ENCODE measurements at regions of chrX and their contacts with region 1.

Region 1: GRCh38 chrX:153539171-153539978 is 21.9 kb downstream of the ATP2B3 start:
- DNase-seq: peak; percentile 73 to 81 (median 80)
- ATAC-seq: peak; percentile 98
- H3K4me3 ChIP-seq: no peak overlapping the region
- H3K27ac ChIP-seq: no peak overlapping the region
- H3K4me1 ChIP-seq: peaks cover 0 to 44% of the 10 kb centered on the region in 2 experiments; a peak in 2 of 5 replicates
- H3K27me3 ChIP-seq: peaks cover 0 to 50% of the 10 kb centered on the region in 2 experiments; a peak in 4 of 5 replicates
- CTCF ChIP-seq: peak; percentile 94 to 99 (median 99)
- EP300 ChIP-seq: no peak
- POLR2A ChIP-seq: no peak
- RAD21 ChIP-seq: peak; percentile 85 to 86

Region 2: GRCh38 chrX:153477901-153478300 is 61.5 kb before region 1 on chrX:
- CTCF ChIA-PET with region 1: no interaction called
- POLR2A ChIA-PET with region 1: no interaction called
- in situ Hi-C with region 1: no loop called
- intact Hi-C with region 1: no loop called
- DNase-seq: no peak
- ATAC-seq: no peak
- H3K4me3 ChIP-seq: no peak overlapping the region
- H3K27ac ChIP-seq: no peak overlapping the region
- H3K4me1 ChIP-seq: peaks cover 4 to 54% of the 10 kb centered on the region in 2 experiments; a peak in 4 of 5 replicates
- H3K27me3 ChIP-seq: no peaks in the 10 kb centered on the region
- CTCF ChIP-seq: no peak
- EP300 ChIP-seq: no peak
- POLR2A ChIP-seq: no peak
- RAD21 ChIP-seq: no peak

Region 3: DNA sequence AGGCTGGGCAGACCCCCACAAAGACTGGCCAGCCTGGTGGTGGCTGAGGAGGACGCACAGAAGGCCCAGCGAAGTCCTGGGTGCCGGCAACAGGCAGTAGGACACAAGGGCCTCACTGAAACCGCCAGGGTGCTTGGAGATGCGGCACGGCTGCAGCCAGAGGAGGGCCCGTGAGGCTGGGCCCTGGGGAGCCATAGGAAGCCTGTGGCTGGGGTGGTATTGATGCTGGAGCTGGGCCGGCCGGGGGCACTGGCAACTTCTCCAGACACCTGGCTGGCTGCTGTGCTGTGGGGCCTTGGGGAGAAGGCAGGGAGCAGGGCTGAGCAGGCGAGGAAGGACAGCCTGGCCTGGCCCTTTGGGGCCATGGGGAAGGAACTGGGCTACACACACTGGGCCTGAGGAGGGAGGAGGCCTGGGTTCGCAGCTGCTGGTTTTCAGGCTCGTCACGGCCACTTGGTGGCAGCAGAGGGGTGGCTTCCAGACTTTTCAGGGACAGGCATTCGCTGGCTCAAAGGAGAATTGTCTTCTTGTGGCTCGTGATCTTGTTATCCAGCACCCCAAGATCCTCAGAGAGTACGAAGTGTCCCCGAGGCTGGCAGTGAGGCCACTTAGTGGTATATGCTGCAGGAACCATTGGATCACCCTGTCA is 15.3 kb after region 1 on chrX:
- CTCF ChIA-PET with region 1: interaction called, 3 read pairs
- POLR2A ChIA-PET with region 1: interaction called, 5 read pairs
- in situ Hi-C with region 1: no loop called
- intact Hi-C with region 1: loop called (anchors 1 kb)
- DNase-seq: peak; percentile 68 to 75 (median 68)
- ATAC-seq: peak; percentile 92
- H3K4me3 ChIP-seq: no peak overlapping the region
- H3K27ac ChIP-seq: no peak overlapping the region
- H3K4me1 ChIP-seq: peaks cover 0 to 27% of the 10 kb centered on the region in 2 experiments; a peak in 2 of 5 replicates
- H3K27me3 ChIP-seq: peaks cover 31 to 80% of the 10 kb centered on the region in 2 experiments
- CTCF ChIP-seq: peak; percentile 76 to 87 (median 81)
- EP300 ChIP-seq: no peak
- POLR2A ChIP-seq: no peak
- RAD21 ChIP-seq: peak; percentile 41 to 75

Region 4: DNA sequence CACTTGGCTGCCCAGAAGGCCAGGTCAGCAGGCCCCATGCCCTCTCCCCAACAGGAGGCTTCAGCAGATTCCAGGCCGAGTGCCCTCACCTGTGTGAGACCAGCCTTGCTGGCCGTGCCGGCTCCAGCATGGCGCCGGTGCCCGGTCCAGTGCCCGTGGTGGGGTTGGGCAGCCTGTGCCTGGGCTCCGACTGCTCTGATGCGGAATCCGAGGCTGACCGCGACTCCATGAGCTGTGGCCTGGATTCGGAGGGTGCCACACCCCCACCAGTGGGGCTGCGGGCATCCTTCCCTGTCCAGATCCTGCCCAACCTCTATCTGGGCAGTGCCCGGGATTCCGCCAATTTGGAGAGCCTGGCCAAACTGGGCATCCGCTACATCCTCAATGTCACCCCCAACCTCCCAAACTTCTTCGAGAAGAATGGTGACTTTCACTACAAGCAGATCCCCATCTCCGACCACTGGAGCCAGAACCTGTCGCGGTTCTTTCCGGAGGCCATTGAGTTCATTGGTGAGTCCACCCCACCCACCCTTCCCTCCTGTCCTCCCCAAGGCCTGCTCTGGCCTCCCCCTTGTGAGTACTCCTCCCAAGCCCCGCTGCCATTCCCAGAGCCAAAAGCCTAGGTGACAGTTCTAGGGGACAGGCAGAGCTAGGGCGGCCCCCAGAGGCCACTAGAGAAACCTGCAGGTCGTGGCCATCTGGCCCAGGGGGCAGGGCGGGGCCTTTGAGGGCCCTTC is 110.0 kb after region 1 on chrX:
- CTCF ChIA-PET with region 1: interaction called, 4 read pairs
- POLR2A ChIA-PET with region 1: interaction called, 3 read pairs
- in situ Hi-C with region 1: no loop called
- intact Hi-C with region 1: loop called (anchors 5 kb)
- DNase-seq: peak; percentile 52 to 74 (median 61)
- ATAC-seq: peak; percentile 87
- H3K4me3 ChIP-seq: no peak overlapping the region
- H3K27ac ChIP-seq: no peak overlapping the region
- H3K4me1 ChIP-seq: peaks cover 5 to 49% of the 10 kb centered on the region in 2 experiments; a peak in 3 of 5 replicates
- H3K27me3 ChIP-seq: no peaks in the 10 kb centered on the region; a peak in 1 of 5 replicates
- CTCF ChIP-seq: peak; percentile 66 to 90 (median 77)
- EP300 ChIP-seq: no peak
- POLR2A ChIP-seq: no peak
- RAD21 ChIP-seq: peak in 1 of 2 experiments; percentile 64; a peak in 2 of 4 replicates

Region 5: GRCh38 chrX:153667956-153668396 is 128.6 kb after region 1 on chrX:
- CTCF ChIA-PET with region 1: interaction called, 14 read pairs
- POLR2A ChIA-PET with region 1: interaction called, 3 read pairs
- in situ Hi-C with region 1: no loop called
- intact Hi-C with region 1: loop called (anchors 5 kb)
- DNase-seq: peak; percentile 72 to 86 (median 74)
- ATAC-seq: peak; percentile 90
- H3K4me3 ChIP-seq: no peak overlapping the region
- H3K27ac ChIP-seq: no peak overlapping the region
- H3K4me1 ChIP-seq: peaks cover 5 to 43% of the 10 kb centered on the region in 2 experiments; a peak in 4 of 5 replicates
- H3K27me3 ChIP-seq: peaks cover 2 to 18% of the 10 kb centered on the region in 2 experiments; a peak in 3 of 5 replicates
- CTCF ChIP-seq: peak; percentile 82 to 91 (median 89)
- EP300 ChIP-seq: no peak
- POLR2A ChIP-seq: no peak
- RAD21 ChIP-seq: peak; percentile 62 to 76

Region 6: GRCh38 chrX:153708415-153708814 is 169.0 kb after region 1 on chrX:
- CTCF ChIA-PET with region 1: interaction called, 14 read pairs
- POLR2A ChIA-PET with region 1: no interaction called
- in situ Hi-C with region 1: no loop called
- intact Hi-C with region 1: no loop called
- DNase-seq: peak; percentile 50 to 89 (median 65)
- ATAC-seq: peak; percentile 98
- H3K4me3 ChIP-seq: no peak overlapping the region
- H3K27ac ChIP-seq: peak overlapping the region; percentile 60; the same call in 2 of the 3 replicates
- H3K4me1 ChIP-seq: peaks cover 3 to 13% of the 10 kb centered on the region in 2 experiments; a peak in 4 of 5 replicates
- H3K27me3 ChIP-seq: no peaks in the 10 kb centered on the region
- CTCF ChIP-seq: peak; percentile 85 to 90 (median 87)
- EP300 ChIP-seq: no peak
- POLR2A ChIP-seq: no peak
- RAD21 ChIP-seq: peak; percentile 69 to 79

Region 7: GRCh38 chrX:154051201-154051810 is 511.9 kb after region 1 on chrX:
- CTCF ChIA-PET with region 1: no interaction called
- POLR2A ChIA-PET with region 1: no interaction called
- in situ Hi-C with region 1: no loop called
- intact Hi-C with region 1: no loop called
- DNase-seq: peak; percentile 57 to 78 (median 63)
- ATAC-seq: peak; percentile 91
- H3K4me3 ChIP-seq: no peak overlapping the region
- H3K27ac ChIP-seq: peak overlapping the region; percentile 22; the same call in 2 of the 3 replicates
- H3K4me1 ChIP-seq: peaks cover 5 to 15% of the 10 kb centered on the region in 2 experiments; a peak in 3 of 5 replicates
- H3K27me3 ChIP-seq: no peaks in the 10 kb centered on the region
- CTCF ChIP-seq: peak; percentile 63 to 76 (median 64)
- EP300 ChIP-seq: no peak
- POLR2A ChIP-seq: no peak
- RAD21 ChIP-seq: peak in 1 of 2 experiments; percentile 21; a peak in 1 of 4 replicates

Measured in K562 (cell line).